Psoas muscle (tissue), 8 donors: ENCODE measurements at regions of chr10 and their contacts with region 1.

Region 1: GRCh38 chr10:125838802-125839575 is 15.6 kb downstream of the BCCIP start:
- DNase-seq: no peak
- ATAC-seq: no peak
- H3K4me3 ChIP-seq: no peak overlapping the region
- H3K27ac ChIP-seq: no peak overlapping the region
- H3K4me1 ChIP-seq: no peaks in the 10 kb centered on the region
- H3K27me3 ChIP-seq: no peaks in the 10 kb centered on the region
- CTCF ChIP-seq: no peak

Region 2: GRCh38 chr10:125742465-125742864 is 96.5 kb before region 1 on chr10:
- intact Hi-C with region 1: loop called in 1 of 2 experiments (anchors 5 kb)
- DNase-seq: no peak
- ATAC-seq: no peak
- H3K4me3 ChIP-seq: no peak overlapping the region
- H3K27ac ChIP-seq: no peak overlapping the region
- H3K4me1 ChIP-seq: no peaks in the 10 kb centered on the region
- H3K27me3 ChIP-seq: no peaks in the 10 kb centered on the region
- CTCF ChIP-seq: no peak

Region 3: DNA sequence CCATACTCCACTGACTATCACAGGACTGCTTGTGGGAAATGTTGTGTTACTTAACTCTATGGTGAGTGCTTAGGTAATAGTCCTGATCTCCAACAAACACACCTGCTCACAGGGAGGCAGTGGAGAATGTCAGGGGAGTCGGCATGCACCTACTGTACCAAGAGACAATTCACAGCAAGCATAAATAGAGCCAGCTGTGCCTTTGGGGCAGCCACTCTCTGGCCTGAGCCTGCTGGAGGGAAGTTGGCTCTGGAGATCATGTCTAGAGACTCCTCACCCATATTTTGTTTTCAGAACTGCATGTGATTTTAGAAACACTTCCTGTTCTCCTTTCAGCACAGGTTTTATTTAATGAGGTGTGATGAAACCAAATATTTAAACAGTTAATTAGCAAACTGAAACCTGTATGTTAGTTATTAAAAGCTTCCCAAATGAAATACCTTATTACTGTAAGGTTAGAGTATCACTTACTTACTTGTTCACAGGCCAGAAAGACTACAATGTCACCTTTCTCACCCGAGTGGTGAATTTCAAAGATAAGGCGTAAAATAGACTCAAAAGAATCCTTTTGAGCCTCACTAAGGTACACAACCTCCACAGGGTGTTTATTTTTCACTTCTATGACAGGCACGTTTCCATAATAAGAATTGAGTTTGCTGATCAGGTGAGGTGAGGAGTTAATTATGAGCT is 20.3 kb after region 1 on chr10:
- intact Hi-C with region 1: no loop called
- DNase-seq: no peak
- ATAC-seq: no peak
- H3K4me3 ChIP-seq: no peak overlapping the region
- H3K27ac ChIP-seq: no peak overlapping the region
- H3K4me1 ChIP-seq: no peaks in the 10 kb centered on the region
- H3K27me3 ChIP-seq: no peaks in the 10 kb centered on the region
- CTCF ChIP-seq: no peak

Region 4: DNA sequence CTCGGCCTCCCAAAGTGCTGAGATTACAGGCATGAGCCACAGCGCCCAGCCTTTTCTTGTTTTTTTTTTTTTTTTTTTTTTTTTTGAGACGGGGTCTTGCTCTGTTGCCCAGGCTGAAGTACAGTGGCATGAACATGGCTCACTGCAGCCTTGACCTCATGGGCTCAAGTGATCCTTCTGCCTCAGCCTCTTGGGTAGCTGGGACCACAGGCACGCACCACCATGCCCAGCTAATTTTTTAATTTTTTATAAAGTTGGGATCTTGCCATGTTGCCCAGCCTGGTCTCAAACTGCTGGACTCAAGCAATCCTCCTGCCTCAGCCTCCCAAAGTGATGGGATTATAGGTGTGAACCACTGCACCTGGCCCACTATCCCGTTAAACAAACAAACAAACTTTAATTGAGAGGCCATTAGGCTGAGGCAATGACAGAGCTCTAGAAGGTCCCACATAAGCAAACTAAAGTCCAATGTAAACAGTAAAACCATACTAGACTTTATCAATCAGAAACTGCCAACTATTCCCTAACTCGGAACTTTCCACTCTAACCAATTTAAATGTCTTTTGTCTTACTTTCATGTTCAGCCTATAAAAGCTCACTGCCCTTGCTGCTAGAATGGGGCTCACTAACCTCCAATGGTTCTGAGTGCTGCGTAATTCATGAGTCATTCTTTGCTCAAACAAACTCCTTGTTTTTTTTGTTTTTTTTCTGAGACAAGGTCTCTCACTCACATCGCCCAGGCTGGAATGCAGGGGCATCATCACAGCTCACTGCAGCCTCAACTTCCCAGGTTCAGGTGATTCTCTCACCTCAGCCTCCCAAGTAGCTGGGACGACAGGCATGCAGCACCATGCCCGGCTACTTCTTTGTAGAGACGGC is 40.2 kb after region 1 on chr10:
- intact Hi-C with region 1: no loop called
- DNase-seq: no peak
- ATAC-seq: no peak
- H3K4me3 ChIP-seq: no peak overlapping the region
- H3K27ac ChIP-seq: no peak overlapping the region
- H3K4me1 ChIP-seq: no peaks in the 10 kb centered on the region
- H3K27me3 ChIP-seq: no peaks in the 10 kb centered on the region
- CTCF ChIP-seq: no peak

Region 5: DNA sequence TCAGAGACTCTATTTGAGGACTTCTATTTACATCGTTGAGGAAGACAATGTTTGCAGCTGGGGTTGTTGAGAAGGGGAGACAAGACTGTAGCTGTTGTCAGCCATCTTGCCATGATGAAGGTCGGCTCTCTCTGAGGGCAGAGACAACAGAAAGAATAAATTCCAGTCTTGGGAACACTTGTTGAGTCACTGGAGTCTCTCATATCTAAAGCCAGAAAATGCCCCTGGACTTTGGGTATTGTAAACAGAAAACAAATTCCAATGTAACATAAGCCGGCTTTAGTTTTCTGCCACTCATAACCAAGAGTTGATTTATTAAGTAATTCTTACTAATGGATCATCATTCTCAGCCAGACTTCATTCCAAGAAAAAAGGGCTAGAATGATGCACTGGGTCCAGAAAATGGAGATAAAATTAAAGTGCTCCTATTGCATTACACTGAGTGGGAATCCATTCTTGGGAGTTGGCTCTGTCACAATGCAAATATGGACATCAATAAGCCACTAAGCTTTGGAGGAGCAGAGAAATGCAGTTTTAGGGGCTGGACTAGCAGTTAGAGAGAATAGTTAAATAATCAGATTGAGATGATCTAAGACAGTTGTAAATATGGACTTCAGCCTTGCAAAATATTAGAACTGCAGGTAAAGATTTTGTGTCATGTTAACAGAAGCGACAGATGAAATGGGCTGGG is 470.3 kb after region 1 on chr10:
- intact Hi-C with region 1: no loop called
- DNase-seq: no peak
- ATAC-seq: no peak
- H3K4me3 ChIP-seq: no peak overlapping the region
- H3K27ac ChIP-seq: no peak overlapping the region
- H3K4me1 ChIP-seq: no peaks in the 10 kb centered on the region
- H3K27me3 ChIP-seq: no peaks in the 10 kb centered on the region
- CTCF ChIP-seq: no peak